B cell (primary cell): ENCODE measurements at regions of chr16 and their contacts with region 1.

Region 1: DNA sequence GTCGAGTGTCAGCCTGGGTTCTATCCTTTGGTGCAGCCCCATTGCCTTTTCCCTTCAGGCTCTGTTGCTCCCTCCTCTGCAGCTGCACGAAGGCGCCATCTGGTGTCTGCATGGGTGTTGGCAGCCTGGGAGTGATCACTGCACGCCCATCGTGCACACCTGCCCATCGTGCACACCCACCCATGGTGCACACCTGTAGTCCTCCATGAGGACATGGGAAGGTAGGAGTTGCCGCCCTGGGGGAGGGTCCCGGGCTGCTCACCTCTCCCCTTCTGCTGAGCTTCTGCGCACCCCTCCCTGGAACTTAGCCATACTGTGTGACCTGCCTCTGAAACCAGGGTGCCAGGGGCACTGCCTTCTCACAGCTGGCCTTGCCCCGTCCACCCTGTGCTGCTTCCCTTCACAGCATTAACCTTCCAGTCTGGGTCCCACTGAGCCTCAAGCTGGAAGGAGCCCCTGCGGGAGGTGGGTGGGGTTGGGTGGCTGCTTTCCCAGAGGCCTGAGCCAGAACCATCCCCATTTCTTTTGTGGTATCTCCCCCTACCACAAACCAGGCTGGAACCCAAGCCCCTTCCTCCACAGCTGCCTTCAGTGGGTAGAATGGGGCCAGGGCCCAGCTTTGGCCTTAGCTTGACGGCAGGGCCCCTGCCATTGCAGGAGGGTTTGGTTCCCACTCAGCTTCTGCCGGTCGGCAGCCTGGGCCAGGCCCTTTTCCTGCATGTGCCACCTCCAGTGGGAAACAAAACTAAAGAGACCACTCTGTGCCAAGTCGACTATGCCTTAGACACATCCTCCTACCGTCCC is 2.9 kb downstream of the CTRL start:
- DNase-seq: peak; percentile 79
- ATAC-seq: peak; percentile 82
- H3K4me3 ChIP-seq: no peak overlapping the region
- H3K4me3 Mint-ChIP-seq: no peak overlapping the region
- H3K27ac ChIP-seq: no peak overlapping the region
- H3K27ac Mint-ChIP-seq: peak overlapping the region; percentile 50
- H3K4me1 ChIP-seq: peaks cover 9 to 27% of the 10 kb centered on the region in 2 donors
- H3K4me1 Mint-ChIP-seq: peaks cover 26% of the 10 kb centered on the region
- H3K27me3 ChIP-seq: no peaks in the 10 kb centered on the region
- H3K27me3 Mint-ChIP-seq: no peaks in the 10 kb centered on the region
- CTCF ChIP-seq: peak; percentile 77

Region 2: GRCh38 chr16:67833035-67833417 is 95.7 kb before region 1 on chr16:
- CTCF ChIA-PET with region 1: no interaction called
- POLR2A ChIA-PET with region 1: no interaction called
- intact Hi-C with region 1: no loop called
- DNase-seq: peak; percentile 29
- ATAC-seq: no peak
- H3K4me3 ChIP-seq: peak overlapping the region; percentile 47 to 76 (median 75)
- H3K4me3 Mint-ChIP-seq: peak overlapping the region; percentile 89
- H3K27ac ChIP-seq: peak overlapping the region in 1 of 2 donors; percentile 64
- H3K27ac Mint-ChIP-seq: no peak overlapping the region
- H3K4me1 ChIP-seq: peaks cover 12 to 16% of the 10 kb centered on the region in 2 donors
- H3K4me1 Mint-ChIP-seq: peaks cover 16% of the 10 kb centered on the region
- H3K27me3 ChIP-seq: no peaks in the 10 kb centered on the region
- H3K27me3 Mint-ChIP-seq: no peaks in the 10 kb centered on the region
- CTCF ChIP-seq: no peak

Region 3: GRCh38 chr16:67844441-67844840 is 84.3 kb before region 1 on chr16:
- CTCF ChIA-PET with region 1: no interaction called
- POLR2A ChIA-PET with region 1: no interaction called
- intact Hi-C with region 1: no loop called
- DNase-seq: no peak
- ATAC-seq: no peak
- H3K4me3 ChIP-seq: no peak overlapping the region
- H3K4me3 Mint-ChIP-seq: peak overlapping the region; percentile 53
- H3K27ac ChIP-seq: no peak overlapping the region
- H3K27ac Mint-ChIP-seq: peak overlapping the region; percentile 70
- H3K4me1 ChIP-seq: peaks cover 39 to 53% of the 10 kb centered on the region in 2 donors
- H3K4me1 Mint-ChIP-seq: peaks cover 50% of the 10 kb centered on the region
- H3K27me3 ChIP-seq: no peaks in the 10 kb centered on the region
- H3K27me3 Mint-ChIP-seq: no peaks in the 10 kb centered on the region
- CTCF ChIP-seq: no peak

Region 4: GRCh38 chr16:67942200-67942509 is 13.4 kb after region 1 on chr16:
- CTCF ChIA-PET with region 1: interaction called, 11 read pairs
- POLR2A ChIA-PET with region 1: no interaction called
- intact Hi-C with region 1: no loop called
- DNase-seq: peak; percentile 50
- ATAC-seq: peak; percentile 67
- H3K4me3 ChIP-seq: no peak overlapping the region
- H3K4me3 Mint-ChIP-seq: no peak overlapping the region
- H3K27ac ChIP-seq: no peak overlapping the region
- H3K27ac Mint-ChIP-seq: no peak overlapping the region
- H3K4me1 ChIP-seq: peaks cover 15 to 33% of the 10 kb centered on the region in 2 donors
- H3K4me1 Mint-ChIP-seq: peaks cover 17% of the 10 kb centered on the region
- H3K27me3 ChIP-seq: no peaks in the 10 kb centered on the region
- H3K27me3 Mint-ChIP-seq: no peaks in the 10 kb centered on the region
- CTCF ChIP-seq: peak; percentile 71